Heart right ventricle (tissue), 16 donors: ENCODE measurements at regions of chr9 and their contacts with region 1.

Region 1: DNA sequence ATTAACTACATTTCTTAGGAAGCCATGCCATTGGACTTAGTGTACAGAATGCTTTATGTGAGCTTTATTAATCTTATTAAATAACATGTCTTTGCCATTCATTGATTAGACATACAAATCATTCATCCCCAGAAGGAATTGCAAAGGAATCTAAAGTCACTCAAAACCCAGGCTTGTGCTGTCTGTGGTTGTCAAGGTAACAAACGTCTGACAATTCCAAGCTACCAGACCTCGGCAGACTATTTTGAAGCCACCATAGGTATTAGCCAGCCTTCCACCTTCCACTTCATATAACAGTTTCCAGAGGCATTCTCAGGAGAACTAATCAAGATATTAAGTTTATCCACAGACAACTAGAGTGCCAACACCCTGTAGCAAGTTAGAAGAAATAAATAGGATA is 135.2 kb upstream of the TUSC1 start:
- DNase-seq: no peak
- ATAC-seq: no peak
- H3K4me3 ChIP-seq: no peak overlapping the region
- H3K27ac ChIP-seq: no peak overlapping the region
- H3K4me1 ChIP-seq: no peaks in the 10 kb centered on the region
- H3K27me3 ChIP-seq: no peaks in the 10 kb centered on the region
- CTCF ChIP-seq: no peak

Region 2: GRCh38 chr9:25752398-25752797 is 61.1 kb before region 1 on chr9:
- intact Hi-C with region 1: loop called in 1 of 10 experiments (anchors 10 kb)
- DNase-seq: no peak
- ATAC-seq: no peak
- H3K4me3 ChIP-seq: no peak overlapping the region
- H3K27ac ChIP-seq: no peak overlapping the region
- H3K4me1 ChIP-seq: no peaks in the 10 kb centered on the region
- H3K27me3 ChIP-seq: no peaks in the 10 kb centered on the region
- CTCF ChIP-seq: no peak

Region 3: GRCh38 chr9:25850803-25851202 is 37.3 kb after region 1 on chr9:
- intact Hi-C with region 1: no loop called
- DNase-seq: no peak
- ATAC-seq: no peak
- H3K4me3 ChIP-seq: no peak overlapping the region
- H3K27ac ChIP-seq: no peak overlapping the region
- H3K4me1 ChIP-seq: no peaks in the 10 kb centered on the region
- H3K27me3 ChIP-seq: no peaks in the 10 kb centered on the region
- CTCF ChIP-seq: no peak